PC-9 (cell line): ENCODE measurements at regions of chr9 and their contacts with region 1.

Region 1: DNA sequence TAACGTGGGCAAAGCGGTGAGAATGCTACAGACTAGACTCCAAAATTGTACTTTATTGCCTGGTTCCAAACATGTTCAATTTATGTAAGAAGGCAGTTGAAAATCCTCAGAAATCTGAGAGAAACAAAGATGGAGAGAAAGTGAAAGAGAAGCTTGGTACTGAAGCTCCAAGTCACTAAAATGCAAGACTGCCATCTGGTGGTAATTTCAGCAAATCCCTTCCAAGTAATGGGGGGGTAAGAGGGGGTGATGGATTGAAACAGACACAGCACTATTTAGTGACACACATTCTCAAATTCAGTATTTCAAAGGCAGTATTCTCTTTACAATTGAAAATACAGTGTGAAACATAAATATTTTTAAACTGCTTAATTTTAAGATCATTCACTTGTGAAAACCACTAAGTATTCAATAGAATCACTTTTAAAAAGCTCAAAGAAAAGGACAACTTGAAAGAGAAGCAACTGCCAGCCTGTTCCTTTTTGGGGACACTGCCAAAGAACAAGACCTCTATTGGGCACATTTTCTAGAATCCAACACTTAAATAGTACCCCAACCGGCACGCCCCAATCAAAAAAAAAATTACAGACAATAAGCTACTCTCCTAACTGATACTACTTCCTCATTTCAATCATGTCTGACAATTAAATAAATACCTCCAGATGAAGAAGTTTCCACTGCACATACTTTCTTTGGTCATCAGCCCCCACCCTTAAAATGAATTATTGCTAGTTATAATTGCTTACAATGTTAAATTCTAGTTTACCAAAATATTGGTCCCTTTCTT is 131.5 kb downstream of the AGTPBP1 start:
- DNase-seq: peak in 1 of 2 experiments; percentile 15
- H3K4me3 ChIP-seq: no peak overlapping the region
- H3K27ac ChIP-seq: no peak overlapping the region
- H3K4me1 ChIP-seq: no peaks in the 10 kb centered on the region
- H3K27me3 ChIP-seq: no peaks in the 10 kb centered on the region
- CTCF ChIP-seq: peak; percentile 91

Region 2: GRCh38 chr9:84187090-84187489 is 1423.2 kb before region 1 on chr9:
- CTCF ChIA-PET with region 1: interaction called, 11 read pairs
- POLR2A ChIA-PET with region 1: no interaction called
- intact Hi-C with region 1: no loop called
- DNase-seq: no peak
- H3K4me3 ChIP-seq: no peak overlapping the region
- H3K27ac ChIP-seq: no peak overlapping the region
- H3K4me1 ChIP-seq: peaks cover 7% of the 10 kb centered on the region
- H3K27me3 ChIP-seq: no peaks in the 10 kb centered on the region
- CTCF ChIP-seq: no peak

Region 3: GRCh38 chr9:84397151-84397728 is 1213.0 kb before region 1 on chr9:
- CTCF ChIA-PET with region 1: interaction called, 19 read pairs
- POLR2A ChIA-PET with region 1: no interaction called
- intact Hi-C with region 1: loop called (anchors 1 kb)
- DNase-seq: peak; percentile 38 to 68
- H3K4me3 ChIP-seq: no peak overlapping the region
- H3K27ac ChIP-seq: no peak overlapping the region
- H3K4me1 ChIP-seq: no peaks in the 10 kb centered on the region
- H3K27me3 ChIP-seq: no peaks in the 10 kb centered on the region
- CTCF ChIP-seq: peak; percentile 92

Region 4: DNA sequence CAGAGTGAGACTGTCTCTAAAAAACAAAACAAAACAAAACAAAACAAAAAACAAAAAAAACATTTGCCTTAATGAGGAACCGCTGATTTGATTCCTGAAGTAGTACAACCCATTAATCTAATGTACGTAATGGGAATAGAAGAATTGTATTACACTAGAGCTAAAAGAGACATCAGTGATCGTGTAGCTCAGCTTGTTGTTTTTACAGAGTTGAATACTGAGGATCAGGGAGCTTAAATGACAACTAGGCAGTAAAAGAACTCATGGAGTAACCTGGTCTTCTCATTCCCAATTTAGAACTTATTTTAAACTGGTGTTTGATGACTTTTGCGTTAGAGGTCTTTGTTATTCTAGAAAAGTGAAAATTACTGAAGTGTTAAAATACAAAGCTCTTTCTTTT is 1204.6 kb before region 1 on chr9:
- CTCF ChIA-PET with region 1: interaction called, 12 read pairs
- POLR2A ChIA-PET with region 1: no interaction called
- intact Hi-C with region 1: no loop called
- DNase-seq: no peak
- H3K4me3 ChIP-seq: no peak overlapping the region
- H3K27ac ChIP-seq: no peak overlapping the region
- H3K4me1 ChIP-seq: no peaks in the 10 kb centered on the region
- H3K27me3 ChIP-seq: peaks cover 9% of the 10 kb centered on the region; the same call in 1 of the 2 replicates
- CTCF ChIP-seq: no peak

Region 5: DNA sequence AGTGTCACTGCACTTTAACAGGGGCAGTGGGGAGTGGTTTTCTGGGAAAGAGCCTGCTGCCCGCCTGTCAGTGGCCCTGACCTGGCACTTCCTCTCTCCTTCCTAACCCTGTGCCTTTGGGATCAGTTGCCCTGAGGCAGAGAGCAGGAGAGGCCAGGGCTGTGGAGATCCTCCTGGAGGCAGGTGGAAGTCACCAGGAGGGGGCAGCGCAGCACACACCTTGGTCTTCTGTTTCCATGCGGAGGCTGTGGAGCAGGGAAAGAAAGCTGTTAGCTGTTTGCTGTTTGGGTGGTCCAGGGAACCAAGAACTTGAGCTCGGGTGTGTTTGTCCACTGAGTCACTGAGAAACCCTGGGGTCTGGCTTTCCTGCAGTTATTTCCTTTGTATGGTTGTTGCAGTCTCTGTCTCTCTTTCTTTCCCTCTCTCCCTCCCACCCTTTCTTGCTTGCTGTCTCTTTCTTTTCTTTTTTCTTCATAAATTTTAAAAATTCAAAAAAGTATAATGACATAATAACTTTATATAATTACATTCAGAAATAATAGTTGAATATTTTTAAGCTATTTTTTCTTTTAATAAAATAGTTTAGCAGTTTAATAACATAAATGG is 912.7 kb before region 1 on chr9:
- CTCF ChIA-PET with region 1: no interaction called
- POLR2A ChIA-PET with region 1: no interaction called
- intact Hi-C with region 1: loop called (anchors 5 kb)
- DNase-seq: peak in 1 of 2 experiments; percentile 27
- H3K4me3 ChIP-seq: no peak overlapping the region
- H3K27ac ChIP-seq: no peak overlapping the region
- H3K4me1 ChIP-seq: no peaks in the 10 kb centered on the region
- H3K27me3 ChIP-seq: peaks cover 4% of the 10 kb centered on the region; the same call in 1 of the 2 replicates
- CTCF ChIP-seq: peak; percentile 65

Region 6: DNA sequence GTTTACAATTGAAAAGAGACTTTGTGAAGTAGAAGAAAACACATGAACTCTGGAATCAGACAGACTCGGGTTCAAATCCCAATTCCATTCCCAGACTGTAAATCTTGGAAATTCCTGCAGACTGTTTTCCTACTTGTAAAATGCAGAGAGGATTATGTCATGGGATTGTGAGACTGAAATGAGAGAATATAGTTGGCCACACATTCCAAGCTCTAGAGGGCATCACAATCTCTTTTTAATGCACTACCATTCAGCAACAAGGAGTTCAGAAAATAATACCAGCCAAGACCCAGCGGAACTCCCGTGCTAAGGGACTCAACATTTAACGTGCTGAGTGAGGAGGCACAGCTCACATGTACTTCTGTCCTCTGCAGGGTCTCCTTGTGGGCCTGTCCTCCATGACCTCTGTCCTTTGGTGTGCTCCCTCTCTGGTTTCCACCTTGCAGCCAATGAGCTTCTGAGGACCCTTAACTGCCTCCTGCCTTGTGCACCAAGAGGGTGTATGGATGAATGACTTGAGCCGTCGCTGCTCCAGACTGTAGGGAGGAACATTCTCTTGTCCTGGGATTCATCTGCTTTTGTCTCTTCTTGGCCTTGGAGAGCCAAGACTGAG is 677.2 kb before region 1 on chr9:
- CTCF ChIA-PET with region 1: interaction called, 21 read pairs
- POLR2A ChIA-PET with region 1: no interaction called
- intact Hi-C with region 1: no loop called
- DNase-seq: no peak
- H3K4me3 ChIP-seq: no peak overlapping the region
- H3K27ac ChIP-seq: no peak overlapping the region
- H3K4me1 ChIP-seq: no peaks in the 10 kb centered on the region
- H3K27me3 ChIP-seq: 0 out of 2 replicates have a peak, but pooled peaks cover 3% of the 10 kb centered on the region
- CTCF ChIP-seq: no peak

Region 7: DNA sequence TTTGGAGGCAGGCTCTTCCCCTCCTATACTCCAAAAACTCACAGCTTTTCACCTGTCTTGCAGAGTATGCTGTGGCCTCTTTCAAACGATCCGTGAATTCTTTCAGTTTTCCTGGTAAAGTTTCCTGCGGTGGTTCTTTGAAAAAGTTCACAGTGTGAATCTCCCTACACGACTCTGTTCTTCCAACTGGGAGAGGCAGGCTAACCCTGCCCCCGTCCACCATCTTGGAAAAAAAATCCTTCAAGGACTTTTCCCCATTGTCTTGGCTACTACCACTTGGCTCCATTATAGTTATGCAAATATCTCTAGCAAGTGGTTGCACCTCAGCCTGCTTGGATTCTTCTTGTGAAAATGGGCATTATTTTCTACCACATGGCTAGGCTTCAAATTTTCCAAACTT is 251.1 kb before region 1 on chr9:
- CTCF ChIA-PET with region 1: no interaction called
- POLR2A ChIA-PET with region 1: no interaction called
- intact Hi-C with region 1: loop called (anchors 10 kb)
- DNase-seq: no peak
- H3K4me3 ChIP-seq: no peak overlapping the region
- H3K27ac ChIP-seq: no peak overlapping the region
- H3K4me1 ChIP-seq: no peaks in the 10 kb centered on the region
- H3K27me3 ChIP-seq: no peaks in the 10 kb centered on the region; the same call in 1 of the 2 replicates
- CTCF ChIP-seq: no peak

Region 8: GRCh38 chr9:85408494-85408893 is 201.8 kb before region 1 on chr9:
- CTCF ChIA-PET with region 1: no interaction called
- POLR2A ChIA-PET with region 1: no interaction called
- intact Hi-C with region 1: no loop called
- DNase-seq: no peak
- H3K4me3 ChIP-seq: no peak overlapping the region
- H3K27ac ChIP-seq: no peak overlapping the region
- H3K4me1 ChIP-seq: no peaks in the 10 kb centered on the region
- H3K27me3 ChIP-seq: peaks cover 15% of the 10 kb centered on the region; the same call in 1 of the 2 replicates
- CTCF ChIP-seq: no peak

Region 9: GRCh38 chr9:85559526-85559925 is 50.7 kb before region 1 on chr9:
- CTCF ChIA-PET with region 1: no interaction called
- POLR2A ChIA-PET with region 1: no interaction called
- intact Hi-C with region 1: no loop called
- DNase-seq: no peak
- H3K4me3 ChIP-seq: no peak overlapping the region
- H3K27ac ChIP-seq: peak overlapping the region; percentile 35; the same call in 1 of the 2 replicates
- H3K4me1 ChIP-seq: no peaks in the 10 kb centered on the region; the same call in 1 of the 2 replicates
- H3K27me3 ChIP-seq: no peaks in the 10 kb centered on the region
- CTCF ChIP-seq: no peak